AG04449 (cell line): ENCODE measurements at regions of chr6 and their contacts with region 1.

Region 1: GRCh38 chr6:35240840-35241801 is 18.4 kb upstream of the ZNF76 start:
- DNase-seq: no peak
- H3K4me3 ChIP-seq: no peak overlapping the region
- CTCF ChIP-seq: peak; percentile 92

Region 2: GRCh38 chr6:35139908-35140655 is 101.0 kb before region 1 on chr6:
- CTCF ChIA-PET with region 1: interaction called, 340 read pairs
- POLR2A ChIA-PET with region 1: no interaction called
- DNase-seq: peak; percentile 41
- H3K4me3 ChIP-seq: no peak overlapping the region
- CTCF ChIP-seq: peak; percentile 58

Region 3: GRCh38 chr6:35154262-35154661 is 86.9 kb before region 1 on chr6:
- CTCF ChIA-PET with region 1: interaction called, 340 read pairs
- POLR2A ChIA-PET with region 1: no interaction called
- DNase-seq: no peak
- H3K4me3 ChIP-seq: no peak overlapping the region
- CTCF ChIP-seq: no peak

Region 4: GRCh38 chr6:35202066-35202546 is 39.0 kb before region 1 on chr6:
- CTCF ChIA-PET with region 1: interaction called, 77 read pairs
- POLR2A ChIA-PET with region 1: no interaction called
- DNase-seq: no peak
- H3K4me3 ChIP-seq: no peak overlapping the region
- CTCF ChIP-seq: no peak

Region 5: GRCh38 chr6:35224720-35225119 is 16.4 kb before region 1 on chr6:
- CTCF ChIA-PET with region 1: interaction called, 98 read pairs
- POLR2A ChIA-PET with region 1: interaction called, 3 read pairs
- DNase-seq: no peak
- H3K4me3 ChIP-seq: no peak overlapping the region
- CTCF ChIP-seq: no peak

Region 6: DNA sequence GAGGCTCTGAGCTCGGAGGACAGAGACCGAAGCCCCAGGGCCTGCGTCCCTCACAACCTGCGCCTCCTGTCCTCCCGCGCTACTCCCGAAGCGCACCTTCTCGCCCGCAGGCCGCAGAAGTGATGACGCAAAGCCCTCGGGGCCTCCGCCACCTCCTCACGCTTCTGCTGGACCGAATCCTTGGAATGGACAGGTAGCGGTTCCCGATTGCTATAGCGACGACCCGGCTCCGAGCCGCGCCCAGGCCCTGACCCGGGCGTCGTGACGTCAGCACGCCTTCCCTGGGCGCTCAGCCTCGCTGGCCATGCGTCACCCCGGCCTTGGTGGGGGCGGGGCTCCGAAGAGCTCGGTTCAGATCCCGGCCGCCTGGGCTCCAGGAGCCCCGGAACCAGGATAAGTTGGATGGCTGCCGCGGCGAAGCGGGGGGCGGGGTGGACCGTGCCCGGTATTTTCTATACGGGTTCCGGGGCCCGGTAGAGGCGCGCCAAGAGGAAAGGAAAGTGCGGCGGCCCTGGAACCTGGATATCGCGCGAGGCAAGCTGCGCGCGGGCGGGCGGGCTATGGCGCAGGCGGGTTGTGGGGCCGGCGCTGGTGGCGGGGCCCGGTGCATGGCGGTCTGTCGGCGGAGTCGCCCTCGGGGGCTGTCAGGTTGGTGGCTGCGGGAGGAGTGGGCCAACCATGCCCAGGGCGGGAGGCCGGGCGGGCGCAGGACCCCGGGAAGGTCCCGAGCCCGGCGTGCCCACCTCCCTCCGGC is 18.2 kb after region 1 on chr6 and contains the start of gene ZNF76:
- CTCF ChIA-PET with region 1: interaction called, 69 read pairs
- POLR2A ChIA-PET with region 1: interaction called, 4 read pairs
- DNase-seq: peak; percentile 42
- H3K4me3 ChIP-seq: peak within 1 kb of the TSS; percentile 99
- CTCF ChIP-seq: no peak